ENCODE measurements at regions of chr12 and their contacts with region 1.

Region 1: GRCh38 chr12:121550974-121551634 is 29.7 kb downstream of the KDM2B start:
- DNase-seq: no peak
- H3K4me3 ChIP-seq: no peak overlapping the region
- H3K27ac ChIP-seq: no peak overlapping the region
- H3K27me3 ChIP-seq: no peaks in the 10 kb centered on the region
- CTCF ChIP-seq: no peak

Region 2: GRCh38 chr12:121261398-121261797 is 289.7 kb before region 1 on chr12:
- CTCF ChIA-PET with region 1: no interaction called
- POLR2A ChIA-PET with region 1: no interaction called
- DNase-seq: no peak
- H3K4me3 ChIP-seq: no peak overlapping the region
- H3K27ac ChIP-seq: no peak overlapping the region
- H3K27me3 ChIP-seq: no peaks in the 10 kb centered on the region
- CTCF ChIP-seq: no peak

Region 3: DNA sequence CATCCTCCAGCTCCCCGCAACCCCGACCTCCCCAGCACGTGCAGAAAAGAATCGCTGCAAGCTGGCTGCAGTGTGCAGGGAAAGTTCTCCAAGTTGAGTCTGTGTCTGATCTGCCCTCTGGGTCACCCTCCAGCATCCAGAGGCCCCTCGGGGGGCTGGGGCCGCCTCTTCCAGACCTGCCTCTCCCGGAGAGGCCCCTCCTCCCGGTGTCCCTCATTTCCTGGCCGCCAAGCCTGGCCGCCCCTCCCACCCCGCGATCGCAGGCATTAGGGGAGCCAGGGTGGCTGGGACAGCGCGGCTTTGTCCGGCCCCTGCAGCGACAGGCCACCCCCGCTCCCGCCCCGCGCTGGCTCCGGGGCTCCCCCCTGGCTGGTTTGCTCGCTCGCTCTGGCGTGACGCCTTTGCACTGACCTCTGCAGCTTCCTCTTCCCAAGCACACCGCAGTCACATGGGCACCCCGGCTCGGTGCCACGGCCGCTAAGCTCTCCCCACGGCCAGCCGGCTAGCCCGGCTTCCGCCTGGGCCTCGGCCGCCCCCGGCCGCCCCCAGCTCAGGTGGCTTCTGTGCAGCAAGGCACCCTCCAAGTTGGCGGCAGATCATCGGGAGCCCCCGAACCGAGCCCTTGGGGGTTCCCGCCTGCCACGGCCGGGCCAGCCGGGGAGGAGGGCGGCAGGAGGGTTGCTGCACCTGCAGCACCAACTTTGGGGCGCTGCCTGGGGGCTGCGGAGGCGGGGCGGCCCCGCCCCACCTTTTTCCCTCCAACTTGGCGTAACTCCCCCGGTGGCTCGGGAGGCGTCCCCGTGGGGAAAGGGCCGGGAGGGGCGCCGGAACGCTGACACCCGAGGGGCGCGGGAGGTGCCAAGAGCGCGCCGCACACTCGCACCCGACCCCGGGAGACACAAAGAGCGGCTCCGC is 13.9 kb before region 1 on chr12:
- CTCF ChIA-PET with region 1: interaction called, 15 read pairs
- POLR2A ChIA-PET with region 1: interaction called, 12 read pairs
- DNase-seq: peak; percentile 11
- H3K4me3 ChIP-seq: peak overlapping the region; percentile 58
- H3K27ac ChIP-seq: peak overlapping the region; percentile 84
- H3K27me3 ChIP-seq: no peaks in the 10 kb centered on the region
- CTCF ChIP-seq: no peak

Region 4: GRCh38 chr12:121579981-121580868 is 29.1 kb after region 1 on chr12:
- CTCF ChIA-PET with region 1: interaction called, 13 read pairs
- POLR2A ChIA-PET with region 1: interaction called, 12 read pairs
- DNase-seq: no peak
- H3K4me3 ChIP-seq: peak overlapping the region; percentile 69
- H3K27ac ChIP-seq: peak overlapping the region; percentile 68
- H3K27me3 ChIP-seq: no peaks in the 10 kb centered on the region
- CTCF ChIP-seq: no peak

Region 5: DNA sequence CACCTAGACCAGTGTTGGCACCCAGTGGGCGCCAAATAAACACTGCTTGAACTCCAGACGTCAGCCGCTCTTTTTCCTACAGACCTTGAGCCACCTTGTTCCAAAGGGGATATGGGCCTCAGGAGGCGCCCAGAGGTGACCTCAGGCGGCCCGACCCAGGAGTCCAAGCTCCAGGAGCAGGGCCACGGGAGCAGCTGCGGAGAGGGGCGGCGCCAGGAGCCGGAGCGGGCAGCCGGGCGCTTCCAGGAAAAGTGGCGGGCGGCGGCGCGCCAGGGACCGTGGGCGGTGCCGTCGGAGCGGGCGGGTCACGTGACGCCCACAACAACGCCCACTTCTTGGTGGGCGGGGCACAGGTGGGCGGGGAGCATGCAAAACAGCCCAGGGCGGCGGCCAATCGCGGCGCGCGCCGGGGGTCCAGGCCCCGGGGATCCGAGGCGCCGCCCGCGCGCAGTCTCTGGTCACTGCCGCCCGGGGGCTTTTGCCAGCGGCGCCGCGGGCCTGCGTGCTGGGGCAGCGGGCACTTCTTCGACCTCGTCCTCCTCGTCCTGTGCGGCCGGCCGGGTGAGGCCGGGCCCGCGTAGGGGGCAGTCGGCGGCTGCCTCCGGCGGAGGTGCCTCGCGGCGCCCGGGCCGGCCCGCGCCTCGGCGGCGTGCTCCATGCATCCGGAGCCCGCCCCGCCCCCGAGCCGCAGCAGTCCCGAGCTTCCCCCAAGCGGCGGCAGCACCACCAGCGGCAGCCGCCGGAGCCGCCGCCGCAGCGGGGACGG is 75.2 kb after region 1 on chr12 and contains the start of gene ORAI1:
- CTCF ChIA-PET with region 1: interaction called, 60 read pairs
- POLR2A ChIA-PET with region 1: interaction called, 7 read pairs
- DNase-seq: peak; percentile 73
- H3K4me3 ChIP-seq: peak within 1 kb of the TSS; percentile 70
- H3K27ac ChIP-seq: peak within 1 kb of the TSS; percentile 68
- H3K27me3 ChIP-seq: no peaks in the 10 kb centered on the region
- CTCF ChIP-seq: no peak
- polyA plus RNA-seq, gene ORAI1: 13.6 and 19.0 TPM in 2 replicates

Region 6: GRCh38 chr12:121668750-121669520 is 117.8 kb after region 1 on chr12:
- CTCF ChIA-PET with region 1: interaction called, 162 read pairs
- POLR2A ChIA-PET with region 1: interaction called, 13 read pairs
- DNase-seq: no peak
- H3K4me3 ChIP-seq: no peak overlapping the region
- H3K27ac ChIP-seq: no peak overlapping the region
- H3K27me3 ChIP-seq: no peaks in the 10 kb centered on the region
- CTCF ChIP-seq: peak; percentile 78

Region 7: DNA sequence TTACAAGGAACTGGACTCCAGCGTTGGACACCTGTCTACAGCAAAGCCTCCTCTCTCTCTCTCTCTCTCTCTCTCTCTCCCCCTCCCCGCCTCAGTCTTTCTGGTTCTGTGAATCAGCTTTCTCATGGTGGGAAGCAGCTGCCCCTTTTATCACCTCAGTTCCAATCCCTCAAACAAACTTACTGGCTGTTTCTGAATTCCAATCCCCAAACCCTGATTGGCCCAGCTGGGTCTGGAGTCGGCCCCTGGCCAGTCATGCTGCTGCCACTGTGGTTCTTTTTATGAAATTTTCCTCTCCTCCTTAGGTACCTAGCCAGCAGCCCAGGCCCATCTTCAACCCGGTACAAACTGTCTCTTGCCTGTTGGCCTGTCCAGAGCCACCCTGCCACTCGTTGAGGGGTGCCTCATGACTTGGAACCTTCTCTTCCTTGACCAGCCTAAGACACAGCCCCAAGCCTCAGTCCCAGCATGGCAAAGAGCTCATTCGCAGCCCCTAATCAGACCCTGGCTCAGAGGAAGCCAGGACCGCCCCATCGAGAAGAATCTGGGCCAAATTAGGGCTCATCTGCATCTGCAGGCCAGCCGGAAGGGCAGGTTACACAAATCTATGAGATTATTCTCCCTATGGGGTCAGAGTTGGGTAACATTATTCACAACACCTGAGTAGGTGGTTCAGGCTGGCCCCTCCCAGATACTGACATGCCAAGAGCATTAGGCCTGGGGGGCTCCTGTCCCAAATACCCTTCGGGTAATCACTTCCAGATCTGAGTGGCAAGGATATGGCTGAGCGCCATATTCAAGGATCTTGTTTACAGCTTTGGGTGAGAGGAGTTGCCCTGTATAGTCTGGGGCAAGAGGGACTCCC is 127.8 kb after region 1 on chr12:
- CTCF ChIA-PET with region 1: interaction called, 99 read pairs
- POLR2A ChIA-PET with region 1: no interaction called
- DNase-seq: no peak
- H3K4me3 ChIP-seq: no peak overlapping the region
- H3K27ac ChIP-seq: no peak overlapping the region
- H3K27me3 ChIP-seq: no peaks in the 10 kb centered on the region
- CTCF ChIP-seq: no peak